ENCODE measurements at regions of chr10 and their contacts with region 1.

Region 1: GRCh38 chr10:49518982-49519578 is 19.8 kb downstream of the ERCC6 start:
- DNase-seq: no peak
- H3K4me3 Mint-ChIP-seq: no peak overlapping the region
- H3K27ac Mint-ChIP-seq: no peak overlapping the region
- H3K4me1 Mint-ChIP-seq: no peaks in the 10 kb centered on the region
- H3K27me3 Mint-ChIP-seq: no peaks in the 10 kb centered on the region

Region 2: GRCh38 chr10:49407552-49408137 is 111.4 kb before region 1 on chr10:
- intact Hi-C with region 1: loop called (anchors 1 kb)
- DNase-seq: peak; percentile 59
- H3K4me3 Mint-ChIP-seq: no peak overlapping the region
- H3K27ac Mint-ChIP-seq: no peak overlapping the region
- H3K4me1 Mint-ChIP-seq: no peaks in the 10 kb centered on the region
- H3K27me3 Mint-ChIP-seq: peaks cover 22% of the 10 kb centered on the region

Region 3: DNA sequence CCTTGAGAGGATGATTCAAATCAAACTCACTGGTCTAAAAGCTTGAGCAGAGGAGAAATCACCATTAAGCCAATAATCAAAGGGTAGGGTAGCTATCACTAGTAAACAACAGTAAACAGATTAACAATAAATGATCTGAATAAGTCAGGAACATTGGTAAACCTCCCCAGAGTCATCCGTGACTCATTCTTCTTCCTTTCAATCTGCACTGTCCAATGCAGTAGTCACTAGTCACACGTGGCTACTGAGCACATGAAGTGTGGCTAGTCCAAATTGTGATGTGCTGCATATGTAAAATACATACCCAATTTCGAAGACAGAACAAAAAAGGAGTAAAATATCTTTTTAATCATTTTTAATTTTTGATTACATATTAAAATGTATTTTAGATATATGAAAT is 44.2 kb before region 1 on chr10:
- intact Hi-C with region 1: no loop called
- DNase-seq: no peak
- H3K4me3 Mint-ChIP-seq: no peak overlapping the region
- H3K27ac Mint-ChIP-seq: no peak overlapping the region
- H3K4me1 Mint-ChIP-seq: no peaks in the 10 kb centered on the region
- H3K27me3 Mint-ChIP-seq: no peaks in the 10 kb centered on the region